ENCODE measurements at regions of chr6 and their contacts with region 1.

Region 1: DNA sequence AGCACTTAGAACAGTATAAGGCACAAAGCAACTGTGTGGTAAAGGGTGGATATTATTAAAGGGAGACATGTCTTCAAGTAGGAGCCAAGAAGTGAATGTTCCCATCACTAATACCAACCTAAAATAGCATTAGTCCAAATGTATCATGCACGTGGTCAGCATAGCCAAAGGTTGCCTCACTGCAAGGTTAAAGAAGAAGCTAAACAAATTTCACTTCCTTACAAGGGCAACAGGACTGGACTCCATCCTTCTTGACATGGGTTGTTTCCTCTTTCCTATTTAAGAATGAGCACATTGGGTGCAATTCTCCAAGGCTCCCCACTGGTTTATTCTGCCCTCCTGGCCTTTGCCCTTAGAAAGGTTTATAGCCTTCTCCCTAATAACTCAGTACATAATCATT is 186.7 kb downstream of the PHACTR1 start:
- DNase-seq: no peak
- H3K4me3 ChIP-seq: no peak overlapping the region
- H3K27ac ChIP-seq: no peak overlapping the region
- H3K4me1 ChIP-seq: no peaks in the 10 kb centered on the region
- H3K27me3 ChIP-seq: no peaks in the 10 kb centered on the region
- CTCF ChIP-seq: no peak
- EP300 ChIP-seq: no peak
- POLR2A ChIP-seq: no peak

Region 2: GRCh38 chr6:11609315-11610071 is 1293.8 kb before region 1 on chr6:
- in situ Hi-C with region 1: no loop called
- intact Hi-C with region 1: loop called (anchors 5 kb)
- DNase-seq: no peak
- H3K4me3 ChIP-seq: no peak overlapping the region
- H3K27ac ChIP-seq: peak overlapping the region in 1 of 4 donors; percentile 34
- H3K4me1 ChIP-seq: peaks cover 0 to 33% (median 3%) of the 10 kb centered on the region in 4 donors
- H3K27me3 ChIP-seq: no peaks in the 10 kb centered on the region
- CTCF ChIP-seq: no peak
- EP300 ChIP-seq: no peak
- POLR2A ChIP-seq: no peak

Measured in transverse colon (tissue), 4 donors.